K562 (cell line): ENCODE measurements at regions of chr16 and their contacts with region 1.

Region 1: GRCh38 chr16:20859699-20860098 is 40.5 kb downstream of the DCUN1D3 start:
- DNase-seq: no peak
- ATAC-seq: no peak
- H3K4me3 ChIP-seq: no peak overlapping the region
- H3K27ac ChIP-seq: no peak overlapping the region
- H3K4me1 ChIP-seq: no peaks in the 10 kb centered on the region
- H3K27me3 ChIP-seq: no peaks in the 10 kb centered on the region
- CTCF ChIP-seq: no peak
- EP300 ChIP-seq: no peak
- POLR2A ChIP-seq: no peak
- RAD21 ChIP-seq: no peak

Region 2: GRCh38 chr16:20838240-20838639 is 21.5 kb before region 1 on chr16:
- CTCF ChIA-PET with region 1: no interaction called
- POLR2A ChIA-PET with region 1: no interaction called
- in situ Hi-C with region 1: no loop called
- intact Hi-C with region 1: no loop called
- DNase-seq: no peak
- ATAC-seq: no peak
- H3K4me3 ChIP-seq: no peak overlapping the region
- H3K27ac ChIP-seq: no peak overlapping the region
- H3K4me1 ChIP-seq: no peaks in the 10 kb centered on the region
- H3K27me3 ChIP-seq: no peaks in the 10 kb centered on the region
- CTCF ChIP-seq: no peak
- EP300 ChIP-seq: no peak
- POLR2A ChIP-seq: no peak
- RAD21 ChIP-seq: no peak

Region 3: DNA sequence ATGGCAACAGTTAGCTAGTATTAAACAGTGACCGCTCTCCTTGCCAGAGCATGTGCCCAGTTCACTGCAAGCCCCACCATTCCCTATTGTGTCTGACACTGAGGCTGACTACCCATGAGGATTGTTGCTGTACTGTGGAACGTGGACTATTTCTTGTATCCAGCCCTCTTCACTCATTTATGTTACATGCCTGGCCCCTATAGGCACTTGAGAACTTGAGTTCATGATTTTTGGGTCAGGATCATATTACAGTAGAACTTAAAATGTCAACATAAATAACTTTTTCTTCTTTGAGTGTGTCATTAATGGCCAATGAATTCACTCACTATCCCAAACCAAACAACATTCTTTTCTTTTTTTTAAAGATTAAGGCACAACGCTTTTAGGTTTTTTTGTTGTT is 96.6 kb after region 1 on chr16:
- CTCF ChIA-PET with region 1: no interaction called
- POLR2A ChIA-PET with region 1: no interaction called
- in situ Hi-C with region 1: loop called (anchors 5 kb)
- intact Hi-C with region 1: no loop called
- DNase-seq: no peak
- ATAC-seq: peak; percentile 81
- H3K4me3 ChIP-seq: no peak overlapping the region
- H3K27ac ChIP-seq: no peak overlapping the region
- H3K4me1 ChIP-seq: peaks cover 7 to 8% of the 10 kb centered on the region in 2 experiments; a peak in 1 of 5 replicates
- H3K27me3 ChIP-seq: no peaks in the 10 kb centered on the region
- CTCF ChIP-seq: peak in 2 of 3 experiments; percentile 21 to 58; a peak in 2 of 6 replicates
- EP300 ChIP-seq: no peak
- POLR2A ChIP-seq: no peak
- RAD21 ChIP-seq: peak; percentile 36 to 70; a peak in 3 of 4 replicates